Head of caudate nucleus (tissue), 42 donors: ENCODE measurements at regions of chr1 and their contacts with region 1.

Region 1: GRCh38 chr1:43073490-43074230 is 98.4 kb downstream of the EBNA1BP2 start:
- DNase-seq: peak; percentile 59 to 94 (median 84)

Region 2: GRCh38 chr1:42777852-42778251 is 295.8 kb before region 1 on chr1:
- intact Hi-C with region 1: loop called (anchors 5 kb)
- DNase-seq: peak in 32 of 42 donors; percentile 13 to 77 (median 48)

Region 3: GRCh38 chr1:42913426-42914091 is 160.1 kb before region 1 on chr1:
- intact Hi-C with region 1: loop called (anchors 2 kb)
- DNase-seq: peak in 14 of 42 donors; percentile 31 to 82 (median 54)